ENCODE measurements at regions of chr9 and their contacts with region 1.

Region 1: GRCh38 chr9:35529161-35529823 is 39.4 kb downstream of the RUSC2 start:
- DNase-seq: no peak
- H3K4me3 ChIP-seq: no peak overlapping the region
- H3K27ac ChIP-seq: no peak overlapping the region
- H3K4me1 ChIP-seq: peaks cover 2% of the 10 kb centered on the region
- H3K27me3 ChIP-seq: no peaks in the 10 kb centered on the region
- CTCF ChIP-seq: no peak
- EP300 ChIP-seq: no peak
- POLR2A ChIP-seq: no peak

Region 2: DNA sequence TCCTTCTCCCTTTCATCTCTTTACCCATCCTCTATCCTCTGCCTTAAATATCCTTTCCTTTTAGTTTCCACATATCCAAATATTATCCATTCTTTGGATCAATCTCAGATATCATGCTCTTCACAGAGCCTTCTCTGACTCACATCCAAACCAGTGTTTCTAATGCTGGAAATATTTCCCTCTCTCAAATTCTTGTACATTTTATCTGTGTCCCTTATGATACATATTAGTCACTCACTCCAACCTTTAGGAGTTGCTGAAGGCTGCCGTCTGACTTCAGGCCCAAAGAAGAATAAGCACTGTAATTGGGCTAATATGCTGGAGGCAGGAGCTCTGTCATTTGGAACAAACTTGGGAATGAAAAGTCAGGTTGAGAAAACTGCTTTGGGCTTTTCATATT is 195.7 kb before region 1 on chr9:
- intact Hi-C with region 1: no loop called
- DNase-seq: no peak
- H3K4me3 ChIP-seq: no peak overlapping the region
- H3K27ac ChIP-seq: no peak overlapping the region
- H3K4me1 ChIP-seq: no peaks in the 10 kb centered on the region
- H3K27me3 ChIP-seq: no peaks in the 10 kb centered on the region
- CTCF ChIP-seq: no peak
- EP300 ChIP-seq: no peak
- POLR2A ChIP-seq: no peak

Region 3: DNA sequence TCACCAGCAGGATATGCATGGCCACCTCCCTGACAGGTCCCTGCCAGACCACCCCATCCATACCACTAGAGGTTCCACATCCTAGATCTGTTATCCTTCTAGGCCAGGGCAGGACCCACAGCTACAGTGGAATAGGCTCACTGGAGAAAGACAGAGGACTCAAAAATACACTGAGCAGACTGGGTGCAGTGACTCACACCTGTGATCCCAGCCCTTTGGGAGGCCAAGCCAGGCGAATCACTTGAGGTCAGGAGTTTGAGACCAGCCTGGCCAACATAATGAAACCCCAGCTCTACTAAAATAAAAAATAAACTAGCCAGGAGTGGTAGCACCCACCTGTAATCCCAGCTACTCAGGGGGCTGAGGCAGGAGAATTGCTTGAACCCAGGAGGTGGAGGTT is 19.3 kb after region 1 on chr9:
- intact Hi-C with region 1: loop called in 1 of 4 experiments (anchors 2 kb)
- DNase-seq: no peak
- H3K4me3 ChIP-seq: no peak overlapping the region
- H3K27ac ChIP-seq: no peak overlapping the region
- H3K4me1 ChIP-seq: peaks cover 2% of the 10 kb centered on the region
- H3K27me3 ChIP-seq: no peaks in the 10 kb centered on the region
- CTCF ChIP-seq: no peak
- EP300 ChIP-seq: no peak
- POLR2A ChIP-seq: no peak

Region 4: DNA sequence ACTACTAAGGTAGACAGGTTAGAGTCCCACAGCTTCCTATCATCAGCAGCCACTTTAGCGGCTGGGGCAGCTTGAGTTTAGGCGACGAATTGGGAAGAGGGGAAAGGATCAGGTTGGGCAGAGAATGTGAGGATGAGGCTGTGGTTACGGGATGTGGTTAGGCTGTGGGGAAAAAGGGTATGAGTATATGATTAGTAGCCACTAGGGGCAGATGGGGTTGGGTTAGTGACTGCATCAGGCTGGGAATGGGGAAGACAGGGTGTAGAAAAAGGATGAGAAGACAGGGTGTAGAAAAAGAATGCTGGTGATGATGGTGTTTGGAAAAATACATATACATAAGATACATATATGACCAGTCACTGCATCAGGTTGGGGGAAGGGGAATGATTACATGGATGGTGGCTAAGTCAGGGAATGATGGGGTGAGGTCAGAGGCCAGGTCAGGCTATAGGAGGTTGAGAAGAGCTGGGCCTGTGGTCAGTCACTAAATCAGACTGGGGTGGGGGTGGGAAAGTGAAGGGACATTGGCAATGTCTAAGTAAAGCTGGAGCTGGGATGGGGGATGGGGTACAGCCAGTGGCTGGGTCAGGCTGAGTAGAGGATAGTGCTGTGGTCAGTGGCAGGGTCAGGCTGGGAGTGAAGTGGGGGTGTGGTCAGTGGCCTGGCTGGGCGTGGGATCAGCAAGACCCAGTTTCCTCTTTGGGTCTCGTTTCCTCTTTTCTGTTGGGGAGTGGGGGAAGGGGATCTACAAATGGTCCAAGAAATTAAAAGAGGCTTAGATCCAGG is 200.6 kb after region 1 on chr9:
- intact Hi-C with region 1: no loop called
- DNase-seq: peak in 2 of 5 donors; percentile 44 to 51
- H3K4me3 ChIP-seq: peak overlapping the region; percentile 92
- H3K27ac ChIP-seq: peak overlapping the region; percentile 92 to 96
- H3K4me1 ChIP-seq: peaks cover 34% of the 10 kb centered on the region
- H3K27me3 ChIP-seq: no peaks in the 10 kb centered on the region
- CTCF ChIP-seq: peak in 1 of 3 donors; percentile 11
- EP300 ChIP-seq: no peak
- POLR2A ChIP-seq: no peak

Measured in ovary (tissue), 10 donors.